ENCODE measurements at regions of chr5 and their contacts with region 1.

Region 1: GRCh38 chr5:43305948-43306565 is 7.2 kb downstream of the HMGCS1 start:
- DNase-seq: no peak
- H3K4me3 ChIP-seq: no peak overlapping the region
- H3K27ac ChIP-seq: no peak overlapping the region
- H3K4me1 ChIP-seq: peaks cover 2 to 12% (median 8%) of the 10 kb centered on the region in 4 experiments; a peak in 6 of 7 replicates
- H3K27me3 ChIP-seq: no peaks in the 10 kb centered on the region
- CTCF ChIP-seq: peak in 2 of 3 experiments; percentile 18 to 52; a peak in 2 of 4 replicates
- EP300 ChIP-seq: no peak
- POLR2A ChIP-seq: no peak
- RAD21 ChIP-seq: peak; percentile 39 to 43

Region 2: DNA sequence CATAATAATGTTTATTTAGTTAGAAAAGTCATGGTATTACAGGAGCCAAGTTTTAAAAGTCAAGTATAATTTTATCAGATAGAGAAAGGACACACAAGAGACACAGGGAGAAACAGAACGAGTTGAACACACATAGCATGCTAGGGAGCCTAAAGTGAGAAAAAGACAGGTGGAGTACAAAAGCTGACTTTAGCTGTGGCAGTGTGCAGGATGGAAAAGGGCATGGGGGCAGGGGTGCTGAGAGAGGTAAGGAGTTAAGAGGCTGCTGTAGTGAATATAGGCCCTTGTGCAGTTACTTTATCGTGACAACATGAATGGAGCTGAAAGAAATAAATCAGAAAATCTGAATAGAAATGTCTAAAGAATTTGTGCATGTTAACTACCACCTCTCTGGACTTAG is 10.9 kb before region 1 on chr5:
- CTCF ChIA-PET with region 1: interaction called, 10 read pairs
- POLR2A ChIA-PET with region 1: no interaction called
- DNase-seq: no peak
- H3K4me3 ChIP-seq: no peak overlapping the region
- H3K27ac ChIP-seq: no peak overlapping the region
- H3K4me1 ChIP-seq: no peaks in the 10 kb centered on the region
- H3K27me3 ChIP-seq: no peaks in the 10 kb centered on the region
- CTCF ChIP-seq: no peak
- EP300 ChIP-seq: no peak
- POLR2A ChIP-seq: no peak
- RAD21 ChIP-seq: no peak

Measured in H1 (cell line).